ENCODE measurements at regions of chr14 and their contacts with region 1.

Region 1: DNA sequence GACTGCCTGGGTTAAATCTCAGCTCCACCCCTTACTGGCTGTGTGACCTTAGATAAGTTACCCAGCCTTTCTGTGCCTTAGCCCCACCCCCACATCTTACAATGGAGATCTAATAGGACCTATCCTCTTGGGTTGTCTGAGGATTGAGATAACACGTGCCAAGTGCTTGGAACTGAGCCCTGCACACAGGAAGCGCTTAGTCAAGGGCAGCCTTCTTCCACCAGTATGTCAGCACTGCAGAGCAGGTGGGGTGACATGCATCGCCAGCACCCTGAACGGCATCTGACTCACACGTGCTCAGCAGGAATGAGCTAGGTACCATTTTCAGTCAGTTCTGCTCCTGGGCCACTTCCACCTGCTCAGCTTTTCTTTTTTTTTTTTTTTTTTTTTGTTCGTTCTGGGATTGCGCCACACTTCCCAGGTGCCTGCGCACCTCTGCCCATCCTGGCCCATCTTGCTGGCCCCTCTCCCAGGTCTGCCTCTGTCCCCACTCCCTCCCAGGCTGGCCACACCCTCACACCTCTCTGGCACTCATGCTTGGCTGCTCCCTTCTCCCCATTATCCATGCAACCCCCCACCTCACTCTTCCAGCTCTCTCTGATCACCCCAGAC is 19.6 kb downstream of the LGMN start:
- DNase-seq: no peak
- H3K4me3 ChIP-seq: no peak overlapping the region
- H3K27ac ChIP-seq: no peak overlapping the region
- H3K4me1 ChIP-seq: no peaks in the 10 kb centered on the region
- H3K27me3 ChIP-seq: no peaks in the 10 kb centered on the region
- CTCF ChIP-seq: no peak
- EP300 ChIP-seq: no peak
- POLR2A ChIP-seq: no peak

Region 2: DNA sequence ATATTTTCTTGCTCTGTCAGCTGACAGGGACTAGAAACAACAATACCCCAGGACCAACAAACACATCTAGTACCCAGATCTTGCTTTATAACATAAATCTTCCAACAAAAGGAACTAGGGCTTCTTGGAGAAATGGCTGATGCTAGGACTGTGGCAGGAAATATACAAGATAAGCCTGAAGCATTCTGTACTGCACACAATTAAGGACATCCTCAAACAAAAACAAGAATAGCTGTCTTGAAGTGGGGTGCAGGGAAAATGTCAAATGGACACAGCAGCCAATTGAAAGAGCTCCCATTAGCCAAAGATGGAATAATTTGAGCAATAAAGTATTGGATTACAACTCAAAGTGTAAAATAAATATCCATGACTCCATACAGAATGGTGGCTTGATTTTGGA is 30.5 kb before region 1 on chr14:
- intact Hi-C with region 1: loop called in 1 of 4 experiments (anchors 2 kb)
- DNase-seq: no peak
- H3K4me3 ChIP-seq: no peak overlapping the region
- H3K27ac ChIP-seq: no peak overlapping the region
- H3K4me1 ChIP-seq: no peaks in the 10 kb centered on the region
- H3K27me3 ChIP-seq: no peaks in the 10 kb centered on the region
- CTCF ChIP-seq: no peak
- EP300 ChIP-seq: no peak
- POLR2A ChIP-seq: no peak

Region 3: DNA sequence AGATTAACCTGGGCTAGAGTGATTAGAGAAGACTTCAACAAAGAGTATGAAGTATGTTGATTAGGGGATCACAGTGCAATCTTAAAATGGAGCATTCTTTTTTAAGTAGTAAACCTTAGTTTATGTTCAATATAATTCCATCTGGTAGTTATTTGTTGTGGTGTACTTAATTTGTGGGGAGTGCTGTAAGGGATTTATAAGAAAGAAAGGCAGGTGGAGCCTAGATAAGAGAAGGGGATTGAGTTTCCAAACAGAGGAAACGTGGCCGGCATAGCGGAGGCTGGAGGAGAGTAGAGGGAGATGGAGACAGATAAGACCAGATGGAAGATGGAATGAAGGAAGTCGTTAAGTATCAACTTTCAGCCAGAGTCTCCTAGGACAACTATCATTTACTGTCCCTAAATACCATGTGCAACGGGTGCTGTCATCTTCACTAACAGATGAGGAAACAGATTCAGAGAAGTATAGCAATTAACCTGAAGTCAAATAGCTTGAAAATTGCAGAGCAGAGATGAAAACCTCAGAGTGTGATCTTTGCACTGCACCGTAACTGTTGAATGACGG is 103.4 kb after region 1 on chr14:
- intact Hi-C with region 1: no loop called
- DNase-seq: no peak
- H3K4me3 ChIP-seq: no peak overlapping the region
- H3K27ac ChIP-seq: no peak overlapping the region
- H3K4me1 ChIP-seq: no peaks in the 10 kb centered on the region
- H3K27me3 ChIP-seq: no peaks in the 10 kb centered on the region
- CTCF ChIP-seq: no peak
- EP300 ChIP-seq: no peak
- POLR2A ChIP-seq: no peak

Measured in ovary (tissue), 10 donors.